T-cell (primary cell): ENCODE measurements at regions of chr11 and their contacts with region 1.

Region 1: GRCh38 chr11:65662799-65663638 is at the start of gene RELA:
- DNase-seq: peak; percentile 75 to 93 (median 85)
- ATAC-seq: peak; percentile 83 to 92 (median 89)
- H3K4me3 ChIP-seq: peak within 1 kb of the TSS; percentile 67 to 97
- H3K4me3 Mint-ChIP-seq: peak within 1 kb of the TSS; percentile 86 to 87 (median 87)
- H3K27ac ChIP-seq: peak within 1 kb of the TSS; percentile 94
- H3K27ac Mint-ChIP-seq: peak within 1 kb of the TSS; percentile 94
- H3K4me1 ChIP-seq: peaks cover 6 to 56% of the 10 kb centered on the region in 2 experiments
- H3K4me1 Mint-ChIP-seq: peaks cover 33 to 41% (median 35%) of the 10 kb centered on the region in 3 donors
- H3K27me3 ChIP-seq: no peaks in the 10 kb centered on the region
- H3K27me3 Mint-ChIP-seq: no peaks in the 10 kb centered on the region
- total RNA-seq, gene RELA: 155 to 302 (median 172) TPM

Region 2: DNA sequence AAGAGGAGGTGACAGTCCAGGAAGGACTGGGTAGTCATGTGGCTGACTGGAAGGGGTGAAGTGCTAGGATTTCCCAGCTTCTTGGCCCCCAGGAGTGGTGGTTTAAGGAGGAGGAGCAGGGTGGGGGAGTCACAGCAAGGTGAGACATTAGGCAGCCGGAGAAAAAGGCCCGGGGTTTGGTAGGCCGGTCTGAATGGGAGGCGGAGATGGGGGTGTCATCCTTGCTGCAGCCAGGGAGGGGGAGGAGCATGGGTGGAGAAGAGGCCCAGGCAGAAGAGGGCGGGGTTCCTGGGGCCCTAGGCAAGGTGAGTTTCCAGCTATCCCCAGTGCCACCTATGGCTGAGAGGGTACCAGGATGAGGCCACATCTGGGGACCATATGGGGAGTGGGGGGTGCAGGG is 19.0 kb before region 1 on chr11:
- CTCF ChIA-PET with region 1: interaction called, 4 read pairs
- POLR2A ChIA-PET with region 1: interaction called, 4 to 10 read pairs
- DNase-seq: peak in 1 of 35 experiments; percentile 30
- ATAC-seq: no peak
- H3K4me3 ChIP-seq: no peak overlapping the region
- H3K4me3 Mint-ChIP-seq: peak overlapping the region in 1 of 3 donors; percentile 47
- H3K27ac ChIP-seq: peak overlapping the region; percentile 6
- H3K27ac Mint-ChIP-seq: peak overlapping the region; percentile 80 to 88
- H3K4me1 ChIP-seq: peaks cover 21 to 59% of the 10 kb centered on the region in 2 experiments
- H3K4me1 Mint-ChIP-seq: peaks cover 45 to 53% (median 51%) of the 10 kb centered on the region in 3 donors
- H3K27me3 ChIP-seq: no peaks in the 10 kb centered on the region
- H3K27me3 Mint-ChIP-seq: no peaks in the 10 kb centered on the region

Region 3: GRCh38 chr11:65900125-65900898 is 237.3 kb after region 1 on chr11 and contains the start of gene FOSL1:
- CTCF ChIA-PET with region 1: no interaction called
- POLR2A ChIA-PET with region 1: interaction called in 1 of 2 experiments, 14 read pairs
- DNase-seq: peak; percentile 64 to 96 (median 89)
- ATAC-seq: peak; percentile 91 to 97 (median 94)
- H3K4me3 ChIP-seq: peak within 1 kb of the TSS; percentile 39 to 65
- H3K4me3 Mint-ChIP-seq: peak within 1 kb of the TSS; percentile 61 to 74 (median 64)
- H3K27ac ChIP-seq: peak within 1 kb of the TSS; percentile 47
- H3K27ac Mint-ChIP-seq: peak within 1 kb of the TSS in 1 of 2 donors; percentile 76
- H3K4me1 ChIP-seq: peaks cover 7 to 33% of the 10 kb centered on the region in 2 experiments
- H3K4me1 Mint-ChIP-seq: peaks cover 5 to 19% (median 6%) of the 10 kb centered on the region in 3 donors
- H3K27me3 ChIP-seq: peaks cover 0 to 34% of the 10 kb centered on the region in 2 experiments
- H3K27me3 Mint-ChIP-seq: peaks cover 0 to 3% of the 10 kb centered on the region in 2 donors
- total RNA-seq, gene FOSL1: 0.49 to 1.6 (median 0.65) TPM